ENCODE measurements at regions of chr16 and their contacts with region 1.

Region 1: GRCh38 chr16:30028438-30029076 is 2.5 kb downstream of the TLCD3B start:
- DNase-seq: peak in 1 of 7 donors; percentile 34
- H3K4me3 ChIP-seq: no peak overlapping the region
- H3K27ac ChIP-seq: no peak overlapping the region
- H3K4me1 ChIP-seq: peaks cover 0 to 6% of the 10 kb centered on the region in 2 donors
- H3K27me3 ChIP-seq: peaks cover 17% of the 10 kb centered on the region
- CTCF ChIP-seq: no peak
- POLR2A ChIP-seq: no peak

Region 2: DNA sequence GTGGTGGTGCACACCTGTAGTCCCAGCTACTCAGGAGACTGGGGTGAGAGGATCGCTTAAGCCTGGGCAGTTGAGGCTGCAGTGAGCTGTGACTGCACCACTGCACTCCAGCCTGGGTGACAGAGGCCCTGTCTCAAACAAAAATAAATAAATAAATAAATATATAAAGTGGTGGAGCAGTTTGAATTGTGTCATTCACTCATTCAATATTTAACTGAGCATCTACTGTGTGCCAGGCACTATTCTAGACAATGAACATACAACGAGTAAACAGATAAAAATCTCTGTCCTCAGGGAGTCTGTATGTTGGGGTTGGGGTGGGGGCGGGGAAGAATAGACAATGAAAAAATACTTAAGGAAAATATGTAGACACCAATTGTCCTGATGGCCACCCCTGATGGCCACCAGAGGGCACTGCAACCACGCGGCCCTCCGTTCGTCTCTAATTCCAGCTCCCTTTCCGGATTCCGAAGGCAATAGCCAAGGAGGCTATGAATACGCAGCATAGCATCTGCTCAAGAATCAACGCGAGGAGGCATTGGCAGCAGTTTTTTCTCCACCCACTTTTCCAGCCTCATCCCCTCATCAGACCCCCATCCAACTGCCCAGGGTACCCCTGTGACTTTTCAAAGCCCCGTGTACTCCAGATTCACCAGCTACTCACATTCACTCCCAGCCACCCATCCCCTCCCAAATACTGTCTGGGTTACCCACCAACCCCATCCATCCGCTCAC is 328.1 kb before region 1 on chr16:
- intact Hi-C with region 1: loop called in 1 of 2 experiments (anchors 10 kb)
- DNase-seq: peak; percentile 66 to 89 (median 81)
- H3K4me3 ChIP-seq: no peak overlapping the region
- H3K27ac ChIP-seq: no peak overlapping the region
- H3K4me1 ChIP-seq: no peaks in the 10 kb centered on the region
- H3K27me3 ChIP-seq: no peaks in the 10 kb centered on the region
- CTCF ChIP-seq: peak; percentile 72 to 94 (median 79)
- POLR2A ChIP-seq: no peak